H1 (cell line): ENCODE measurements at regions of chr2 and their contacts with region 1.

Region 1: GRCh38 chr2:30862054-30862651 is 54.9 kb upstream of the CAPN13 start:
- DNase-seq: peak; percentile 41 to 53
- H3K4me3 ChIP-seq: no peak overlapping the region
- H3K27ac ChIP-seq: no peak overlapping the region
- H3K4me1 ChIP-seq: no peaks in the 10 kb centered on the region
- H3K27me3 ChIP-seq: no peaks in the 10 kb centered on the region
- CTCF ChIP-seq: peak; percentile 61 to 99 (median 70)
- EP300 ChIP-seq: no peak
- POLR2A ChIP-seq: no peak
- RAD21 ChIP-seq: peak; percentile 74 to 78

Region 2: GRCh38 chr2:30404319-30404953 is 457.7 kb before region 1 on chr2:
- CTCF ChIA-PET with region 1: no interaction called
- POLR2A ChIA-PET with region 1: no interaction called
- DNase-seq: peak in 1 of 2 experiments; percentile 52
- H3K4me3 ChIP-seq: peak overlapping the region in 1 of 4 experiments; percentile 30; a peak in 2 of 8 replicates
- H3K27ac ChIP-seq: no peak overlapping the region; the same call in 1 of the 2 replicates
- H3K4me1 ChIP-seq: peaks cover 3 to 19% (median 11%) of the 10 kb centered on the region in 4 experiments
- H3K27me3 ChIP-seq: peaks cover 0 to 5% (median 0%) of the 10 kb centered on the region in 4 experiments; a peak in 2 of 7 replicates
- CTCF ChIP-seq: no peak
- EP300 ChIP-seq: no peak
- POLR2A ChIP-seq: no peak
- RAD21 ChIP-seq: no peak

Region 3: DNA sequence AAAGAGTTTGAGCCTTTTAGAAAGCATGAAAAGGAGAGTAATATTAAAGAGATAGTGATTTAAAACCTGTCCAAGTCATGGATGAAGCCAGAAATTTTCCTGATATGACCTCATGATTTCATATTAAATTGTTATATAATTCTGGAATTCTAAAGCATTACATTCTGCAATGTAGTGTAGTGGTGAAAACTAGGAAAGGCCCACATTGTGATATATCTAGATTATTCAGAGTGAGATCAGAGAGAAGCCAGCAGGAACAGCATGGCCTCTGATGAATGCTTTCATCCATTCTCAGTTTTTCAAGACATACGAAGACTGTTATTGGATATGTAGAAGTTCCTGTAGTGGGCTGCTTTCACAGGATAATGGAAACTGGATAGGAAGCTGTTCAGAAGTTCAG is 316.3 kb before region 1 on chr2:
- CTCF ChIA-PET with region 1: no interaction called
- POLR2A ChIA-PET with region 1: no interaction called
- DNase-seq: no peak
- H3K4me3 ChIP-seq: no peak overlapping the region
- H3K27ac ChIP-seq: no peak overlapping the region
- H3K4me1 ChIP-seq: no peaks in the 10 kb centered on the region
- H3K27me3 ChIP-seq: no peaks in the 10 kb centered on the region
- CTCF ChIP-seq: no peak
- EP300 ChIP-seq: no peak
- POLR2A ChIP-seq: no peak
- RAD21 ChIP-seq: no peak

Region 4: DNA sequence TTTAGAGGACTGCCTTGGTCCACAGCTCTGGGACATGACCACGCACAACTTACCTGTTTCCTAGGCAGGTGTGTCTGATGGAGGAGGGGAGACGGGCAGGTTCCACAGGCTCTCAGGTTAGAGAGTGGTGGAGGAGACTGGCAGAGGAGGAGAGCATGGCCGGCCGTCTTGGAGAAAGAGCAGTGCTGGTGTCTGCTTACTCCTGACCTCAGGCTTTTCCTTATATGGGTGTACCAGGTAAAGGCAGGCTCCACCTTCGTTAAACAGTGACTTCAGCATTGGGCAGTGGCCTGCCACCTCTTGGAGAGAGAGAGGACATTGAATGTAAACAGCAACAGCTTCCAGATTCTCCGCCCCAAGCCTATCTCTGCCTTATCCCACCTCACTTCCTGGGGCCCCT is 54.9 kb before region 1 on chr2 and contains the start of gene CAPN13:
- CTCF ChIA-PET with region 1: interaction called, 11 read pairs
- POLR2A ChIA-PET with region 1: no interaction called
- DNase-seq: peak in 1 of 2 experiments; percentile 15
- H3K4me3 ChIP-seq: 0 out of 8 replicates have a peak within 1 kb of the TSS, but pooled peaks of 1 of the 4 experiments have one; percentile 11
- H3K27ac ChIP-seq: no peak within 1 kb of the TSS
- H3K4me1 ChIP-seq: no peaks in the 10 kb centered on the region
- H3K27me3 ChIP-seq: no peaks in the 10 kb centered on the region; a peak in 1 of 7 replicates
- CTCF ChIP-seq: peak in 2 of 3 experiments; percentile 25 to 27; a peak in 3 of 4 replicates
- EP300 ChIP-seq: no peak
- POLR2A ChIP-seq: peak; percentile 57 to 69; a peak in 2 of 3 replicates
- RAD21 ChIP-seq: peak; percentile 7 to 19; a peak in 1 of 4 replicates
- total RNA-seq, gene CAPN13: 0.94 and 2.4 TPM in 2 replicates

Region 5: DNA sequence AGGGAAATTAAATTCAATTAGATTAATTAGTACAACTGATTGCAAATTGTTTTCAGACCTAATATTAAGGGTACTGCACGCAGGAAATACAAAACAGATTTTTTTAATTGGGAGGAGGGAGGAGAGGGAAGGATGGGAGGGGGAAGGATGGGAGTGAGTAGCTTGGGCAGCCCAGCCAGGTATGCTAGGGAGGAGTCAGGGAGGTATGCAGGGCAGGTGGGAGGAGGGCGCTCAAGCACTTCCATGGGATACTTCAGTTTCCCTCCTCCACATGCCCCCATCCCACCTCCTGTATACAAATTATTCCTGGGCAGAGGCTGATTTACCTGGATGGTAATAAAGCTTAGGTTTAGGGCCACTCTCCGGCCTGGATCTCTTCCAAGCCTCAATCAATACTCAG is 21.7 kb after region 1 on chr2:
- CTCF ChIA-PET with region 1: interaction called, 36 read pairs
- POLR2A ChIA-PET with region 1: no interaction called
- DNase-seq: no peak
- H3K4me3 ChIP-seq: no peak overlapping the region
- H3K27ac ChIP-seq: no peak overlapping the region
- H3K4me1 ChIP-seq: peaks cover 2 to 15% (median 8%) of the 10 kb centered on the region in 4 experiments; a peak in 5 of 7 replicates
- H3K27me3 ChIP-seq: no peaks in the 10 kb centered on the region
- CTCF ChIP-seq: no peak
- EP300 ChIP-seq: no peak
- POLR2A ChIP-seq: no peak
- RAD21 ChIP-seq: no peak

Region 6: DNA sequence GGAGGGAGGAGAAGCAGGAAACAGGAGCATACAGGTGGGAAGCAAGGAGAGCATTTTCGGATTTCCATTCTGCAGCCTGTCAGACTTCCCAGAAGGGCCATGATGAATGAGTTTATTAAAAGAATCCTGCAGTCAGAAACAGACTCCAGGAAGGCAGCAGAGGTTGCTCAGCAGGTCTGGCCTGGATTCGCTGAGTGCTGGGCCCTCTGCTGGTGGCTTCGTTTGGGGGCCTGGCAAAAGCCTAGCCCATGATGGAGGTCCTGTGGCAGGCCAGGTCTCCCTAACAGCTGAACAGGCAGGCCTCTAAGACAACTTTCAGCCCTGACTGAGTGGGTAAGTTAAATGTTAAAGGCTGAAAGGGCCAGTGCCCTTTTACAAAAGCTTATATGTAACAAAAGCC is 53.3 kb after region 1 on chr2:
- CTCF ChIA-PET with region 1: interaction called, 17 read pairs
- POLR2A ChIA-PET with region 1: no interaction called
- DNase-seq: peak; percentile 17 to 72
- H3K4me3 ChIP-seq: no peak overlapping the region
- H3K27ac ChIP-seq: no peak overlapping the region
- H3K4me1 ChIP-seq: 0 out of 7 replicates have a peak, but pooled peaks cover 0 to 2% (median 0%) of the 10 kb centered on the region in 4 experiments
- H3K27me3 ChIP-seq: no peaks in the 10 kb centered on the region
- CTCF ChIP-seq: peak; percentile 75 to 88 (median 79)
- EP300 ChIP-seq: no peak
- POLR2A ChIP-seq: no peak
- RAD21 ChIP-seq: peak; percentile 74 to 81

Region 7: GRCh38 chr2:31138037-31138962 is 276.1 kb after region 1 on chr2 and contains the start of gene GALNT14:
- CTCF ChIA-PET with region 1: interaction called, 11 read pairs
- POLR2A ChIA-PET with region 1: no interaction called
- DNase-seq: peak; percentile 33 to 86
- H3K4me3 ChIP-seq: peak within 1 kb of the TSS; percentile 33 to 63 (median 43)
- H3K27ac ChIP-seq: no peak within 1 kb of the TSS
- H3K4me1 ChIP-seq: peaks cover 0 to 5% (median 5%) of the 10 kb centered on the region in 4 experiments; a peak in 4 of 7 replicates
- H3K27me3 ChIP-seq: peaks cover 13 to 50% (median 46%) of the 10 kb centered on the region in 4 experiments
- CTCF ChIP-seq: peak; percentile 41 to 57 (median 47)
- EP300 ChIP-seq: peak in 1 of 2 experiments; percentile 68; a peak in 1 of 3 replicates
- POLR2A ChIP-seq: no peak
- RAD21 ChIP-seq: peak; percentile 38 to 42
- total RNA-seq, gene GALNT14: 10.3 and 13.7 TPM in 2 replicates

Region 8: DNA sequence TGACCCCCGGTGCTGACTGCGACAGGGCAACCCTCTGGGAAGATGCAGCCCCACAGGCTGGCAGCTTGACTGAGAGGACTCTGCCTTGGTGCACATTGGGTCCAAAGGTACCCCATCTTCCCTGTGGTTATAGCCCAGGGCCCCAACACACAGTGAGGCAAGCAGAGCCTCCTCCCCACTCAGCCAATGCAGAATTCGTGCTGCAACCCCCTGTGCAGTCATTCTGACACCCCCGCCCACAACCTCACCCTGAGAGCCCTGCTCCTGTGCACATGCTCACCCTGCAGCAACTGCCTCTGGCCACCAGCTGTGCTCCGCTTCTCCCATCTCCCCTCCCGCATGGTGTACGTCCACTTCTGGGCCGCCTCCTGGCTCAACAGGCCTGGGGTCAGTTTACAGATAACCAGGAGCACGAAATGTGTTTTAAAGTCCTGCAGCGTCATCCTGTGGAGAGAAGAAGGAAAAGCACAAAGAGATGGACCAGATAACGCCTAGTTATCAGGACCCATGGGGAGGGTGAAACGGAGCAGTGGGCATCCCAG is 330.8 kb after region 1 on chr2:
- CTCF ChIA-PET with region 1: interaction called, 18 read pairs
- POLR2A ChIA-PET with region 1: no interaction called
- DNase-seq: peak in 1 of 2 experiments; percentile 47
- H3K4me3 ChIP-seq: no peak overlapping the region
- H3K27ac ChIP-seq: no peak overlapping the region
- H3K4me1 ChIP-seq: no peaks in the 10 kb centered on the region; a peak in 1 of 7 replicates
- H3K27me3 ChIP-seq: no peaks in the 10 kb centered on the region; a peak in 1 of 7 replicates
- CTCF ChIP-seq: peak in 2 of 3 experiments; percentile 58 to 60; a peak in 3 of 4 replicates
- EP300 ChIP-seq: no peak
- POLR2A ChIP-seq: no peak
- RAD21 ChIP-seq: peak; percentile 72 to 84